CD8-positive, alpha-beta T cell (primary cell): ENCODE measurements at regions of chr17 and their contacts with region 1.

Region 1: DNA sequence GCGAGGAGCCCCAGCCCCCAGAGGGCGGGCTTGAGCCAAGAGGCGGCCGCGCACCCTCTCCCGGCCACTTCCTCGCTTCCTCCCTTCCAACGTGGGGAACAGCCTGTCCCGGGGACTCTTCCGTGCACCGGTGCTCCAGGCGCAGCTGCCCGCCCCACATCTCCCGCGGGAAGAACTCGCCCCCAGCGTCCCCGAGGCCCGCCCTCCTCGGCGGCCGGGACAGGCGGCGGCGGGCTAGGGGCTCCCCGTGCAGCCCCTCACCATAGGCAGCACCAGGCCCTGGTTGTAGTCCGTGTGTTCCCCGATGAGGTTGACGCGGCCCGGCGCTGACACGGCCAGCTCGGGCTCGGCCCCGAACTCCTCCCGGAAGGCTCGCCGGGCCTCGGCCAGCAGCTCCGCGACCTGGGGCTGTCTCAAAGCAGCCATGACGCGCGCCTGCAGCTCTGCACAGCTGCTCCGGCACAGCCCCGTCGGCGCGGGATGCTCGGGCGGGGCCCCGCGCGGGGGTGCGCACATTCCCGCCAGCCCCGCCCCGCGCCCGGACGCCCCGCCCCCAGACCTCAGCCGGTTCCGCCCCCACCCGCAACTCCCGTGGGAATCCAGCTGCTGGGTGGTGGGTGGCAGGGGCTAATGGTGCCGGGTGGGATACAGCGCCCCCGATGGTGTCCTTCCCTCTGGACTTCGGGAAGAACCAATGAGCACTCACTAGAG is at the start of gene GALK1:
- DNase-seq: peak; percentile 46 to 89 (median 70)
- ATAC-seq: peak; percentile 94
- H3K4me3 ChIP-seq: peak within 1 kb of the TSS; percentile 62 to 86
- H3K4me3 Mint-ChIP-seq: peak within 1 kb of the TSS; percentile 74
- H3K27ac ChIP-seq: peak within 1 kb of the TSS; percentile 51 to 63
- H3K27ac Mint-ChIP-seq: peak within 1 kb of the TSS; percentile 55
- H3K4me1 ChIP-seq: peaks cover 16% of the 10 kb centered on the region
- H3K4me1 Mint-ChIP-seq: peaks cover 8% of the 10 kb centered on the region
- H3K27me3 ChIP-seq: no peaks in the 10 kb centered on the region
- H3K27me3 Mint-ChIP-seq: no peaks in the 10 kb centered on the region
- CTCF ChIP-seq: peak; percentile 40
- total RNA-seq, gene GALK1: 3.4 to 3.7 TPM

Region 2: DNA sequence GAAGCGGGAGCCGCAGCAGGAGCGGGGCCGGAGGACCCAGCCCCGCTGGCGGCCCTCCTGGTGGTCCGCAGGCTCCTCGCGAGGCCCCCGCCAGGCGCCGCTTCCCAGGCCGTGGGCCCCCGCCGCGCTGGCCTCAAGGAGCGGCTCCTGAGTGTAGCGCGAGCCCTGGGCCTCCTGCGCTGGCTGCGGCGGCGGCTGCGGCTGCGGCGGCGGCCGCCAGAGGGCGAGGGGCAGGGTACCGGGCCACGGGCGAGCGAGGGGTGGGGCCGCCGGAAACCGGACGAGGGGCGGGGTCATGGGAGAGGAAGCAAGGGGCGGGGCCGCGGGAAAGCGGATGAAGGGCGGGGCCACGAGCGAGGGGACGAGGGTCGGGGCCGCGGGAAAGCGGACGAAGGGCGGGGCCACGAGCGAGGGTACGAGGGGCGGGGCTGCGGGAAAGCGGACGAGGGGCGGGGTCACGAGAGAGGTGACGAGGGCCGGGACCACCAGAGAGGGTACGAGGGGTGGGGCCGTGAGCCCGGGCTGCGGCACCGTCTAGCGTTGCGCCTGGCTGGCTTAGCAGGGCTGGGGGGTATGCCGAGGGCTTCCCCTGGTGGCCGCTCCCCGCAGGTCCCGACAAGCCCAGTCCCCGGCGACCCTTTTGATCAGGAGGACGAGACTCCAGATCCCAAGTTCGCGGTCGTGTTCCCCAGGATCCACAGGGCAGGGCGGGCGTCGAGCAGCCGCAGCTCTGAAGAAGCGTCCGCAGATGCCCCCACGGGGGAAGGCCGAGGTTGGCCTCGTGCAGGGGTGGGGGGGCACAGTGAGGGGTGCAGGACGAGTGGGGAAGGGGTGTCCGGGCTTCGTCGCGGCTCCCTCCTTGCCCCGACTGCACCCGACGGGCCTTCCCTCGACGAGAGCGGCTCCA is 175.6 kb before region 1 on chr17:
- CTCF ChIA-PET with region 1: no interaction called
- POLR2A ChIA-PET with region 1: no interaction called
- intact Hi-C with region 1: no loop called
- DNase-seq: peak; percentile 90 to 99 (median 95)
- ATAC-seq: peak; percentile 85
- H3K4me3 ChIP-seq: peak overlapping the region; percentile 59 to 74
- H3K4me3 Mint-ChIP-seq: peak overlapping the region; percentile 77
- H3K27ac ChIP-seq: peak overlapping the region; percentile 48 to 52
- H3K27ac Mint-ChIP-seq: peak overlapping the region; percentile 70
- H3K4me1 ChIP-seq: peaks cover 15% of the 10 kb centered on the region
- H3K4me1 Mint-ChIP-seq: peaks cover 15% of the 10 kb centered on the region
- H3K27me3 ChIP-seq: no peaks in the 10 kb centered on the region
- H3K27me3 Mint-ChIP-seq: no peaks in the 10 kb centered on the region
- CTCF ChIP-seq: peak; percentile 61

Region 3: DNA sequence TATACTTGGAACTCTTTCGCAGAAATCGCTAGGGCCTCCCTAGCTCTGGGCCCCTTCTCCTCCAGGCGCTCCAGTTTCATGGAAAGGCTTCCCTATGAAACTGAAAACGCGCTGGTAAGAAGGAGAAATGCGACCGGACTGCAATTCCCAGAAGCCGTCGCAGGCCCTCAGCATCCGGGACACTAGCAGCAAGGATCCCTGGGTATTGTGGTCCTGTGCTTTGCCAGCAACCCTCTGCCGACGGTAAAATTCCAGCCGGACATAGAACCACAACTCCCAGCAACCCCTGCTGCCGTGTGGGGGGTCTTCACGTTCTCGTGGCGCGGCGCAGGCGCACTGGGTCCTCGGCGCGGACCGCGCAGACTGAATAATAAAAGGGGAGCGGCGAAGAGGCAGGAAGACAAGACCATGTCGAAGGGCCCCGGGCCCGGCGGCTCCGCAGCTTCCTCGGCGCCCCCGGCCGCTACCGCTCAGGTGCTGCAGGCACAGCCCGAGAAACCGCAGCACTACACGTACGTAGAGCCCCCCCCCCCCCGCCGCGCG is 19.7 kb after region 1 on chr17 and contains the start of gene UNK:
- CTCF ChIA-PET with region 1: interaction called, 19 read pairs
- POLR2A ChIA-PET with region 1: interaction called, 180 read pairs
- intact Hi-C with region 1: loop called in 1 of 2 experiments (anchors 1 kb)
- DNase-seq: peak; percentile 91 to 99 (median 96)
- ATAC-seq: peak; percentile 64
- H3K4me3 ChIP-seq: peak within 1 kb of the TSS; percentile 57 to 78
- H3K4me3 Mint-ChIP-seq: peak within 1 kb of the TSS; percentile 93
- H3K27ac ChIP-seq: peak within 1 kb of the TSS; percentile 95 to 100
- H3K27ac Mint-ChIP-seq: peak within 1 kb of the TSS; percentile 98
- H3K4me1 ChIP-seq: peaks cover 39% of the 10 kb centered on the region
- H3K4me1 Mint-ChIP-seq: peaks cover 49% of the 10 kb centered on the region
- H3K27me3 ChIP-seq: no peaks in the 10 kb centered on the region
- H3K27me3 Mint-ChIP-seq: no peaks in the 10 kb centered on the region
- CTCF ChIP-seq: no peak
- total RNA-seq, gene UNK: 37.3 to 42.8 TPM